ENCODE measurements at regions of chr10 and their contacts with region 1.

Region 1: GRCh38 chr10:25875556-25876165 is 58.4 kb upstream of the MYO3A start:
- ATAC-seq: peak; percentile 36 to 84 (median 58)
- H3K4me3 ChIP-seq: no peak overlapping the region
- H3K27ac ChIP-seq: no peak overlapping the region
- H3K4me1 ChIP-seq: no peaks in the 10 kb centered on the region

Region 2: GRCh38 chr10:26269754-26270153 is 394.1 kb after region 1 on chr10:
- in situ Hi-C with region 1: loop called in 2 of 9 experiments (anchors 10 to 25 kb)
- ATAC-seq: peak; percentile 67 to 95 (median 86)
- H3K4me3 ChIP-seq: no peak overlapping the region
- H3K27ac ChIP-seq: no peak overlapping the region
- H3K4me1 ChIP-seq: peaks cover 0 to 9% of the 10 kb centered on the region in 2 donors

Region 3: GRCh38 chr10:26291721-26292480 is 416.2 kb after region 1 on chr10:
- in situ Hi-C with region 1: loop called in 1 of 9 experiments (anchors 25 kb)
- ATAC-seq: peak in 5 of 8 experiments; percentile 79 to 94 (median 82)
- H3K4me3 ChIP-seq: no peak overlapping the region
- H3K27ac ChIP-seq: no peak overlapping the region
- H3K4me1 ChIP-seq: peaks cover 10 to 11% of the 10 kb centered on the region in 2 donors